ENCODE measurements at regions of chr20 and their contacts with region 1.

Region 1: GRCh38 chr20:54389596-54390280 is 85.7 kb upstream of the DOK5 start:
- DNase-seq: no peak
- H3K4me3 ChIP-seq: no peak overlapping the region
- H3K4me3 Mint-ChIP-seq: no peak overlapping the region
- H3K27ac Mint-ChIP-seq: no peak overlapping the region
- H3K4me1 ChIP-seq: no peaks in the 10 kb centered on the region
- H3K4me1 Mint-ChIP-seq: no peaks in the 10 kb centered on the region
- H3K27me3 ChIP-seq: no peaks in the 10 kb centered on the region
- H3K27me3 Mint-ChIP-seq: peaks cover 17% of the 10 kb centered on the region
- CTCF ChIP-seq: no peak

Region 2: DNA sequence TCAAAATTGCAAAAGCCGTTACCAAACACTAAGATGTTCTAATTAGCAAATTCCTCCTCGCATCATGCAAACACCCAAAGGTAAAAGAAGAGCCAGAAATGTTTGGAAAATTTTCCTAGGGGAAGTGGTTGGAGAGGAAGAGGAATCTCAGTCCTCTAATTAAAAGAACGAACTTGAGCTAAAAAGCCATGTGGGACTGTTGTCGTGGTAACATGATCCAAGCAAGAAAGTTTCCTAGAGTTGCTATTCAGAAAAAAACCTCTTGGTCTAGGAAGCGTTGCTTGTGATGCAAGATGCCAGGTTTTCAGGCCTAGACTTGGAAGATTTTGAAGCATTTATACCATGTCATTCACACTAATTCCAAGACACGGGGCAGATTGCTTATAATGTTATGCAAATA is 21.2 kb before region 1 on chr20:
- CTCF ChIA-PET with region 1: no interaction called
- POLR2A ChIA-PET with region 1: no interaction called
- intact Hi-C with region 1: loop called (anchors 2 kb)
- DNase-seq: no peak
- H3K4me3 ChIP-seq: no peak overlapping the region
- H3K4me3 Mint-ChIP-seq: no peak overlapping the region
- H3K27ac Mint-ChIP-seq: no peak overlapping the region
- H3K4me1 ChIP-seq: no peaks in the 10 kb centered on the region
- H3K4me1 Mint-ChIP-seq: no peaks in the 10 kb centered on the region
- H3K27me3 ChIP-seq: no peaks in the 10 kb centered on the region
- H3K27me3 Mint-ChIP-seq: peaks cover 18% of the 10 kb centered on the region
- CTCF ChIP-seq: no peak

Measured in Caco-2 (cell line).